ENCODE measurements at regions of chr10 and their contacts with region 1.

Region 1: DNA sequence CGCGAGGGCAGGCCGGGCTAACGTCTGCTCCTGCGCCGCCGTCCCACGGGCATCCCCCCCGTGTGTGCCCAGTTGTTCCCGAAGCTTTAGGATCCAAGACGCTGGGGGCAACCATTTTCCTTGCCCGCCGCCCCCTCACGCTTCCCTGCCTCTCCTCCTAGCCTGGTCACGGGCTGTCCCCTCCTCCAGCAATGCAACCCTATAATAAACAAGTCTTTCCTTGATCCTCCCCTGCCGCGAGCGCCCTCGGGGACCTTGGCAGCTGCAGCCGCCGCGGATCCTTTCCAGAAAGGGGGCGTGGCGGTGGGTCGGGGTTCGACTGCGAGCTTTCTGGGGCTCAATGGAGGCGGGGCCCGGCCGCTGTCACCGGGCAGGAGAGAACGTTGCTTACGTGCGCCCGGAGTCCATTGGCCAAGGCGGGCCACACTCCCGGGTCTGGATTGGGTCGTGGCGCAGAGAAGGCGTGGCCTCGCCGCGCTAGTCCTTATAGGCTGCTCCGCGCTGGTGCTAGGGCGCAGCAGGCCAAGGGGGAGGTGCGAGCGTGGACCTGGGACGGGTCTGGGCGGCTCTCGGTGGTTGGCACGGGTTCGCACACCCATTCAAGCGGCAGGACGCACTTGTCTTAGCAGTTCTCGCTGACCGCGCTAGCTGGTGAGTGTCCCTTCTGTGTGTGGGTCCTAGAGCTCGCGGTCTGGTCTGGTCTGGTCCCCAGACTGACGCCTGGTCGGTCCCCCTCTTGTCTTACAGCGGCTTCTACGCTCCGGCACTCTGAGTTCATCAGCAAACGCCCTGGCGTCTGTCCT is at the start of gene DDIT4:
- DNase-seq: peak; percentile 99 to 100 (median 100)
- ATAC-seq: peak; percentile 72
- H3K4me3 ChIP-seq: peak within 1 kb of the TSS; percentile 86
- H3K27ac ChIP-seq: peak within 1 kb of the TSS; percentile 91
- H3K4me1 ChIP-seq: peaks cover 34 to 44% of the 10 kb centered on the region in 2 experiments
- H3K27me3 ChIP-seq: no peaks in the 10 kb centered on the region
- CTCF ChIP-seq: no peak; a peak in 1 of 6 replicates
- EP300 ChIP-seq: peak; percentile 34
- POLR2A ChIP-seq: peak; percentile 99
- RAD21 ChIP-seq: peak; percentile 15 to 46
- polyA plus RNA-seq, gene DDIT4: 8.2 to 12.3 TPM

Region 2: GRCh38 chr10:72173635-72174296 is 99.8 kb before region 1 on chr10:
- CTCF ChIA-PET with region 1: no interaction called
- POLR2A ChIA-PET with region 1: interaction called, 10 read pairs
- in situ Hi-C with region 1: no loop called
- intact Hi-C with region 1: no loop called
- DNase-seq: peak in 1 of 4 experiments; percentile 24
- ATAC-seq: peak; percentile 23; the same call in 1 of the 3 replicates
- H3K4me3 ChIP-seq: no peak overlapping the region
- H3K27ac ChIP-seq: no peak overlapping the region
- H3K4me1 ChIP-seq: peaks cover 3 to 17% of the 10 kb centered on the region in 2 experiments; a peak in 3 of 5 replicates
- H3K27me3 ChIP-seq: no peaks in the 10 kb centered on the region
- CTCF ChIP-seq: no peak
- EP300 ChIP-seq: no peak
- POLR2A ChIP-seq: no peak
- RAD21 ChIP-seq: no peak

Region 3: GRCh38 chr10:72229261-72230251 is 44.1 kb before region 1 on chr10:
- CTCF ChIA-PET with region 1: interaction called, 3 read pairs
- POLR2A ChIA-PET with region 1: interaction called, 70 read pairs
- in situ Hi-C with region 1: no loop called
- intact Hi-C with region 1: no loop called
- DNase-seq: no peak
- ATAC-seq: no peak
- H3K4me3 ChIP-seq: no peak overlapping the region
- H3K27ac ChIP-seq: no peak overlapping the region
- H3K4me1 ChIP-seq: no peaks in the 10 kb centered on the region
- H3K27me3 ChIP-seq: no peaks in the 10 kb centered on the region
- CTCF ChIP-seq: no peak
- EP300 ChIP-seq: no peak
- POLR2A ChIP-seq: no peak
- RAD21 ChIP-seq: no peak

Region 4: GRCh38 chr10:72260588-72261322 is 12.9 kb before region 1 on chr10:
- CTCF ChIA-PET with region 1: no interaction called
- POLR2A ChIA-PET with region 1: interaction called, 277 read pairs
- in situ Hi-C with region 1: no loop called
- intact Hi-C with region 1: loop called (anchors 1 kb)
- DNase-seq: peak; percentile 95 to 100 (median 100)
- ATAC-seq: peak; percentile 91
- H3K4me3 ChIP-seq: peak overlapping the region; percentile 54
- H3K27ac ChIP-seq: peak overlapping the region; percentile 94
- H3K4me1 ChIP-seq: peaks cover 43 to 54% of the 10 kb centered on the region in 2 experiments
- H3K27me3 ChIP-seq: no peaks in the 10 kb centered on the region
- CTCF ChIP-seq: peak in 2 of 3 experiments; percentile 30 to 33; a peak in 1 of 6 replicates
- EP300 ChIP-seq: peak; percentile 53; the same call in 1 of the 2 replicates
- POLR2A ChIP-seq: peak; percentile 73
- RAD21 ChIP-seq: no peak; a peak in 1 of 4 replicates

Region 5: DNA sequence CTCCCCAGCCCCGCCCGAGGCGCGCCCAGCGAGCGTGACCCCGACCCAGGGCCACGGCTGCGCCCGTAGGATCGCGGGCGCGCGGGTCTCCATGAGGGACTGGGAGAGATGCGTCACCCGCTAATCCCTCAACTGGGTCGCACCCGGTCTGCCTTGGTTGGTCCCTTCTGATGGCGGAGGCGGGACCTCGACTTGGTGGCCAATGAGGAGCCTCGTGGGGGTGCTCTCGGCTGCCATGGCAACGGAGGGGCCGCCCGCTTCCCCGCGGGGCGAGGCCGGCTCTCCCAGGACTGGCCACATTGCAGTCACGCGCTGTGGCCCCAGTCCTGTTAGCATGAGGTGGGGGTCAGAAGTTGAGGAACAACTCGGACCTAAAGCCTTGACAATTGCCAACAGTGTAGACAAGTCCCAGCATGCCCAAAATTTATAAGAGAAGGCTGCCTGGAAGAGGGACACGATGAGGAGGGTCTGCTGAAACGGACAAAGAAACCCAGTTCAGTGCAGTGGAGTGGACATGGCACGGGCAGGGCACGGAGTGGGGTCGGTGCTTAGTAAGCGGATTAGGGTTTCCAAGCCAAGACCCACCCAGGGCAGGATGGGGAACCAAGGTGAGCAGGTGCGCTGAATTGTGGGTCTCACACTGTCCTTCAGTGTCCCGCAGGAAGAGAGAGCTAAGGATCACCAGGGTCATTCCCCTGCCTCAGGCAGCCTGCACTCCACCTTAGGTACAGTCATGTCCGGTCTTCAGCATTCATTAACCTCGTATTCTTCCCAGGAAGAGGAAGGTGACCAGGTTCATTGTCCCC is 24.6 kb after region 1 on chr10:
- CTCF ChIA-PET with region 1: no interaction called
- POLR2A ChIA-PET with region 1: interaction called, 155 read pairs
- in situ Hi-C with region 1: no loop called
- intact Hi-C with region 1: loop called (anchors 2 kb)
- DNase-seq: peak; percentile 98 to 100 (median 100)
- ATAC-seq: peak; percentile 96
- H3K4me3 ChIP-seq: peak overlapping the region; percentile 55
- H3K27ac ChIP-seq: peak overlapping the region; percentile 94
- H3K4me1 ChIP-seq: peaks cover 32 to 40% of the 10 kb centered on the region in 2 experiments
- H3K27me3 ChIP-seq: no peaks in the 10 kb centered on the region; a peak in 1 of 5 replicates
- CTCF ChIP-seq: peak in 2 of 3 experiments; percentile 19 to 32; a peak in 4 of 6 replicates
- EP300 ChIP-seq: no peak
- POLR2A ChIP-seq: peak; percentile 53
- RAD21 ChIP-seq: peak in 1 of 2 experiments; percentile 43; a peak in 2 of 4 replicates

Region 6: DNA sequence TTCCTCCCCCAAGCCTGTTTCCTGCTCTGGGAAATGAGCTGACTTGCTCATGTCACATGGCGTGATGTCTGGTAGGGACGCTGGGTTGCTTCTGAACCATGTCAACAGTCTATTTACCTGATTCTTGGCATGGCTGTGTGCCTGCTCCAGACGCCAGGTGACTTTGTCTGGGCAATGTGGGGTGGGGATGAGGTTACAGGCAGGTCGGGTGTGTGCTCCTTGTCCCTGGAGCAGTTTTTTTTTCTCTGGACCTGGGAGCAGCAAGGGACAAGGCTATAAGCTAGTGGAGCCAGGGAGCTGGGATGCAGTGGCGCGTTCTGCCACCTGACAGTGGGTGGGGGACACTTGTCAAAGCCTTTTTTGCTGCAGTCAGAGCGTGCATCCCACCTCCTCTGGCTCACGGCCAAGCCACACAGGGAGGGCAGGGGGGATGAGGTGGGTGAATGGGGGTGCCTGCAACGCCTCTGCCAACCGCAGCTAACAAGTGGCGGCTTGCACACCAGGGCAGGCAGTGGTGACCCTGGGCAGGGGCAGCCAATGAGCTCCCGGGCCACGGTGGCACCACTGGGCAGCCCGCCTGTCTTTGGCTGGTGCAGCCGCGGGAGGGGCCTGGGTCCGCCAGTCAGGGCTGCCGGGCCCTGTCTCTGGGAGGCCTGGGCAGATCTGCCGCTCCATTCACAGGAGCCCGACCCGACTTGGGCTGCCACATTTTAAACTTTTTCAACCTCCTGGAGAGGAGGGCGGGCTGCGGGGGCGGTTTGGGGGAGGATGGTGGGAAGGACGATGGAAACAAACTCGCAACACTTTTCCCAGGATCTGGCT is 58.2 kb after region 1 on chr10:
- CTCF ChIA-PET with region 1: interaction called, 12 read pairs
- POLR2A ChIA-PET with region 1: interaction called, 197 read pairs
- in situ Hi-C with region 1: no loop called
- intact Hi-C with region 1: loop called (anchors 1 kb)
- DNase-seq: peak in 1 of 4 experiments; percentile 26
- ATAC-seq: no peak
- H3K4me3 ChIP-seq: no peak overlapping the region
- H3K27ac ChIP-seq: no peak overlapping the region
- H3K4me1 ChIP-seq: peaks cover 18 to 44% of the 10 kb centered on the region in 2 experiments; a peak in 4 of 5 replicates
- H3K27me3 ChIP-seq: no peaks in the 10 kb centered on the region
- CTCF ChIP-seq: no peak
- EP300 ChIP-seq: no peak
- POLR2A ChIP-seq: peak; percentile 47
- RAD21 ChIP-seq: no peak

Measured in K562 (cell line).